Left ventricle myocardium inferior (tissue), 1 donor: ENCODE measurements at regions of chr7 and their contacts with region 1.

Region 1: DNA sequence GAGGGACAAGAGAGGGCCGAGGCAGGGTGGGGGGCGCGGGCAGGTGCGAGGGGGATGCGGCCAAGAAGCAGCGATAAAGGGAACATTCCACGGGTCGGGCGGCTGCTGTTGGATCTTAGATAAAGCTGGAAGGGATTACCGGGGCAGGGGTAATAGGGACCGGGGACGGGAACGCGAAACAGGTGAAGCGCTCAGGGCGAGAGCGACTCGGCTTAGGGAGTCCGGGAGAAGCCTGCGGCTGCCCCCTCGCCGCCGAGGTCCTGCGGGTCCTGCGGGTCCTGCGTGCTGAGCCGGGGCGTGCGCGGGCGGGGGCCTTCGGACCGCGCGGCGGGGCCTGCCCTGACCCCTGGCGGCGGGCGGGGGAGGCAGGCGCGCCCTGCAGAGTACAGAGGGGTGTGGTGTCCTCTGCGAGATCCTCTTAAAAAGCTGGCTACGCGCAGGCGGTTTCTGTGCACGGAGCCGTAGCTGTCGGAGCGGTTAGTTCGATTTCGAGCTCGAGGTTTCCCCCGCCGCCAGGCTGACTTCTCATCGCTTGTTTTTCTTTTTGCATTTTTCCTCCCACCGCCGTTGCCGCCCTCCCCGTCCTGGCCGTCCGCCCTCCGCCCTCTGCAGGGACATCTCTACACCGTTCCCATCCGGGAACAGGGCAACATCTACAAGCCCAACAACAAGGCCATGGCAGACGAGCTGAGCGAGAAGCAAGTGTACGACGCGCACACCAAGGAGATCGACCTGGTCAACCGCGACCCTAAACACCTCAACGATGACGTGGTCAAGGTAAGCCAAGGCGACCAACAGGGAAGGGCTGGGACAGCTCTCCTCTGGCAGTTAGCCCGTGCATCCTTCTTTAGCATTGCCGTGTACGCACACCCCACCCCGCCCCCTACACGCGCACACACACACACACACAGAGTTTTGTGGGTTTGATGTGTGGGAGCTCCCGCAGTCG is 1.4 kb downstream of the CAV1 start:
- DNase-seq: peak; percentile 85
- H3K4me3 ChIP-seq: peak overlapping the region; percentile 83
- H3K27ac ChIP-seq: peak overlapping the region; percentile 98
- H3K4me1 ChIP-seq: peaks cover 87% of the 10 kb centered on the region
- H3K27me3 ChIP-seq: no peaks in the 10 kb centered on the region
- CTCF ChIP-seq: peak; percentile 91

Region 2: GRCh38 chr7:116259871-116260440 is 266.2 kb before region 1 on chr7:
- intact Hi-C with region 1: loop called (anchors 10 kb)
- DNase-seq: no peak
- H3K4me3 ChIP-seq: no peak overlapping the region
- H3K27ac ChIP-seq: no peak overlapping the region
- H3K4me1 ChIP-seq: peaks cover 9% of the 10 kb centered on the region
- H3K27me3 ChIP-seq: no peaks in the 10 kb centered on the region
- CTCF ChIP-seq: no peak

Region 3: DNA sequence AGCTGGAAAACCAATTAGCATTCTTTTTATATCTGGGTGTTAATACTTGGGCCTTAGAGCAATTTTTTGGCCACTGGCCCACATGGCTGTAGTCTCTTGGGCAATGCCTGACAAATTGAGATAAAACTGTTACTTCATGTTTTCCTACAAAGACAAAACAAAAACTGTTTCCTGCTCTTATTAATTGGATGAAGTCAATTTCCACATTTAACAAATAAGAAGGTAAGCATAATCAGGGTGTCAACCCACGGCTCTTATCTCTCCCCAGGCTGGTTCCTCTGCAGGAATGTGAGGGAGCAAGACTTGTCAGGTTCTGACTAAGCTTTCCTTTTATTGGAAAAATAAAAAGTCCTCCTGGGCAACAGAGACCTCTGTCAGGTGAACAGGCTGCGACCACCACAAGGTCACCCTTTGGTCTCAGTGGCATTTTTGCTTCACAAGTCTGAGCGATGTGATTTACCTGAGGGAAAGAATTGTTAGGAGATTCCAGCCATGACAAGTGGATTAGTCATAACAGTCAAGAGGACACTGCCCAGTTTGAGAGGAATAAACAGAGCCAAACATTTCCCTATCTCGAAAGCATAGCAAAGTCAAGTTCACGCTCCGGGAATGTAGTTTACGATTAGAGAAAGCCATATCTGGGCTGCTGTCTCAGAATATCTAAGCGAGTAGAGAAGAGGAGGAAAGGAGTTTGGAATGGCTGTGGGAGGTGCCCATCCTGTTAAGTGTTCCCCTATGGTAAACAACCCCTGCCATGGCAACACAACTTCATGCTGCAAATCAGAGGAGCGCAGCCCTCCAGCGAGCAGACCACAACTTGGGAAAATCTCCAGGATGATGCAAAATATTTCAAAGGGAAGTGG is 171.4 kb before region 1 on chr7:
- intact Hi-C with region 1: loop called (anchors 10 kb)
- DNase-seq: peak; percentile 74
- H3K4me3 ChIP-seq: peak overlapping the region; percentile 51
- H3K27ac ChIP-seq: peak overlapping the region; percentile 96
- H3K4me1 ChIP-seq: peaks cover 62% of the 10 kb centered on the region
- H3K27me3 ChIP-seq: no peaks in the 10 kb centered on the region
- CTCF ChIP-seq: no peak